ENCODE measurements at regions of chr19 and their contacts with region 1.

Region 1: DNA sequence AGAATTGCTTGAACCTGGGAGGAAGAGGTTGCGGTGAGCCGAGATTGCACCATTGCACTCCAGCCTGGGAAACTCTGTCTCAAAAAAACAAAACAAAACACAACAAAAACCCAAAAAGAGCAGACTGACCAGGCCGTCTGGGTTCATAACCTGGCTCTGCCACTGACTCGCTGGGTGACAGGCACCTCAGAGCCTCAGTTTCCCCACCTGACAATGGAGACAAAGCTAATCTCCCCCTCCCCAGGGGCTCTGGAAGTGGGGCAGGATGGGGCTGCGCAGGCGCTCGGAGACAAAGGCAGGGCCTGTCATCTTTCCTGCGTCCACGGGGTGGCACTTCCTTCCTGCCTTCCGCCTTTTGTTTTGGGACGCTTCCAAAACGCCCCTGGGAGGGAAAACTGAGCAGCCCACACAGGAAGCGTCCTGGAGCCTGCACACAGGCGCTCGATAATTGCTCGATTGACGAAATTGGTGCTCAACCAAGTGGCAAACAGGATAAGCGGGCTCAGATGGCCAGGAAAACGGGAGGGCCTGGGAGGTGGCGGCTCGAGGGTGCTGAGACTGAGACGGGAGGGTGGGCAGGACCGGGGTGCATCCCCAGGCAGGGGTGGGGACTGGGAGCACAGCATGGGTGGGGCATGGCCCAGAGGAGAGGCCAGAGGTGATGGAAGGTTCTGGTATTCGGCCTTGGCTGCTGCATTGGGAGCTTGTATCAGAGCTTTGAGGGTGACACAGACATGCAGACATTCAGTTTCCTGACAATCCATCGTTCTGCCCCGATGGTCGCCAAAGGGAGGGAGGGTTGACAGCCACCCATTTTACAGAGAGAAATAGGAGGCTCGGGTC is 17.8 kb downstream of the SPC24 start:
- DNase-seq: peak; percentile 85
- ATAC-seq: peak; percentile 57

Region 2: DNA sequence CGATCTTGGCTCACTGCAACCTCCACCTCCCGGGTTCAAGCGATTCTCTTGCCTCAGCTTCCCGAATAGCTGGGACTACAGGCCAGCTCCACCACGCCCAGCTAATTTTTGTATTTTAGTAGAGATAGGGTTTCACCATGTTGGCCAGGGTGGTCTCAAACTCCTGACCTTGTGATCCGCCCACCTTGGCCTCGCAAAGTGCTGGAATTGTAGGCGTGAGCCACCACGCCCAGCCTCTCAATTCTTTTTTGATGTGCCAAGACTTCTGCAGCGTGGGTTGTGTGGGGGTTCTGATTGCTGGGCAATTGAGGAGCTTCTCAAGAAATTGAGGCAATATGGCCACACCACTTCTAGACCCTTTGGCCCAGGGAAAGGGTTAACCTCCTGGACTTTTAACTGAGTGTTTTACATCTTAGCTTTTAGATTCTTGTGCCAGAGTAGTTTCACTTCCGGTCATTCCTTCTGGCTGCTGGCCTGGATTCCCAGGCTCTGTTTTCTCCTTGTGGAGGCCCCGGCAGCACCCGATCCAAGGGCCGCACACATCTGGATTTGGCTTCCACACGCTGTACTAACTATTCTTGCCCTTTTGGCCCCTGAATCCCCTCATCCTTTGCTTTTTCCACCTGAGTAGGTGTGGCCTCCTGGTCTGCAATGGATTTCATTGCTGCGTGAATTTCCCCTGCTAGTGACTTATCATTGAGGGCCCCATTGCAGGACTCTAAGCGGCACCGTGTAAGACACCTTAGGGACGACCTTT is 162.2 kb before region 1 on chr19:
- intact Hi-C with region 1: no loop called
- DNase-seq: no peak
- ATAC-seq: peak; percentile 67

Region 3: GRCh38 chr19:11155373-11156120 is 17.8 kb after region 1 on chr19 and contains the start of gene SPC24:
- intact Hi-C with region 1: loop called (anchors 2 kb)
- DNase-seq: peak; percentile 97
- ATAC-seq: peak; percentile 93
- total RNA-seq, gene SPC24: 8.6 TPM

Region 4: DNA sequence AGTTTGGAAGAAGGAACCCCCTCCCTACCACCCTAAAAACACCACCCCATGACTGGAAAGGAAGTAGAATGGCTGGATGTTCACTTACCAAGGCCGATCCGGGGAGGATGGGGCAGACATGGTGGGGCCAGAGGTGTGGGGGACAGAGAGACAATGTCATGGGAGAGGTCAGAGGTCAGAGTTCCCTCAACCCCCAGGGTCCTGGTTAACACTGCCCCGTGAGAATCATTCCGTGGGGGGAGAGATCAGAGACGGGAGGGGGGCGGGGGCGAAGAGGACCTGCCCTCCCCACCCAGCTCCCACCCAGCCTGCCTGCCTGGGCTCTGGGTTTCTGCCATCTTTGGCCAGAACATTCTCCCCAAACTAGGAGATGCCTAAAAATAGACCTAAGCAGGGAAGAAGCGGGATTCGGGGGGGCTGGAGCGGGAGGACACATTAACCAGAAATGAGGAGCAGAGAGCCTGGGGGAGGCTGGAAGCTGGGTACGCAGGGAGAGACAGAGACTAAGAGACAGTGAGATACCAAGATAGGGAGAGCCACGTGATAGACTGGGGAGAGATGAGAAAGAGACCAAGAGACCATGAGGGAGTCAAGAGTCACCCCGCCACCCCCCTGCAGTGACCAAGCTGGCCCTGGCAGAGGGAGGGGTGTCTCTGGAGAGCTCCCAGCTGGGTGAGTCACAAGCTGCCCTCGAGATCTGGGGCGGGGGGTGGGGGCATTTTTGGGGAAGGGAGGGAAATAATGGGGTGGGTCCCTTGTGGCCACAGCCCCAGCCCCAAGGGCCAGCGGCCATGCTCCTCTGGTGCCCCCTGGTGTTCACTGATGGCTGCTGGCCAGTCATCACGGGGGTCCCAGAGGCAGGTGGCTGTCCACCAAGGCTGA is 65.7 kb after region 1 on chr19:
- intact Hi-C with region 1: loop called (anchors 1 kb)
- DNase-seq: peak; percentile 84
- ATAC-seq: peak; percentile 75

Region 5: DNA sequence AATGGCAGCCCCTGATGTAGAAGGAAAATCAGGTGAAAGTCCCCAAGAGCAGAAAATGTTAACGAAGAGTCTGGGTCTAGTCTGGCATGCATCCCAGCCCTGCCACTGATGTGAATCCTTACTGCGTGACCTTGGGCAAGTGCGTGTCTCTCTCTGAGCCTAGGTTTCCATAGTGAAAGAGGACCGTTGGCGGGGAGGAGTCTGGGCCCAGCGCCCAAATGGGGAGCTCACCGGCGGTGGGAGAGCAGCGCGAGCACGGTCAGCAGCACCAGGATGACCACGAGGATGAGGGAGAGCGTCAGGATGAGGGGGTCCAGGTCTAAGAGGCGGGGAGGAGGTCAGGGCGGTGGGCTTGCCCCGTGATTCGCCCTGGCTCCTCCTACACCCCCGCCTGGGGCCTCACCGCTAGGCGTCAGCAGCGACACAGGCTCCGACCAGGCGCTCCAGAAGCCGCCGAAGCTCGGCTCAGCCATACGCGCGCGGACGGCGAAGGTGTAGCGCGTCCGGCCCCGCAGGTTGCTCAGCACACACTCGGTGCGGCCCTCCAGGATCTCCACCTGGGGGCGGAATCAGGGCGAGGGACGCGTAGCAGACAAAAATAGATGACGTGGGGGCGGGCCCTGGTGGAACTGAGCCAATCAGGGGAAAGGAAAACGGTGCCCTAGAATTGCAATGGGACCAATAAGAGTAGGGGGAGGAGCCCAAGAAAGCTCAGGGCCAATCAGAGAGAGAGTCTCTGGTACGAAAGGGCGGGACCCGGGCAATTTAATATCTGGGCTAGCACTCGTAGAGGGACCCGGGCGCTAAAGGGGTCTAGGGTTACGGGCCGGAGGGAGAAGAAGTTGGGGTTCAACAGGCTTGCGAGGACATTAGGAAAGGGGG is 243.1 kb after region 1 on chr19:
- intact Hi-C with region 1: loop called (anchors 2 kb)
- DNase-seq: peak; percentile 95
- ATAC-seq: peak; percentile 88